ENCODE measurements at regions of chr12 and their contacts with region 1.

Region 1: DNA sequence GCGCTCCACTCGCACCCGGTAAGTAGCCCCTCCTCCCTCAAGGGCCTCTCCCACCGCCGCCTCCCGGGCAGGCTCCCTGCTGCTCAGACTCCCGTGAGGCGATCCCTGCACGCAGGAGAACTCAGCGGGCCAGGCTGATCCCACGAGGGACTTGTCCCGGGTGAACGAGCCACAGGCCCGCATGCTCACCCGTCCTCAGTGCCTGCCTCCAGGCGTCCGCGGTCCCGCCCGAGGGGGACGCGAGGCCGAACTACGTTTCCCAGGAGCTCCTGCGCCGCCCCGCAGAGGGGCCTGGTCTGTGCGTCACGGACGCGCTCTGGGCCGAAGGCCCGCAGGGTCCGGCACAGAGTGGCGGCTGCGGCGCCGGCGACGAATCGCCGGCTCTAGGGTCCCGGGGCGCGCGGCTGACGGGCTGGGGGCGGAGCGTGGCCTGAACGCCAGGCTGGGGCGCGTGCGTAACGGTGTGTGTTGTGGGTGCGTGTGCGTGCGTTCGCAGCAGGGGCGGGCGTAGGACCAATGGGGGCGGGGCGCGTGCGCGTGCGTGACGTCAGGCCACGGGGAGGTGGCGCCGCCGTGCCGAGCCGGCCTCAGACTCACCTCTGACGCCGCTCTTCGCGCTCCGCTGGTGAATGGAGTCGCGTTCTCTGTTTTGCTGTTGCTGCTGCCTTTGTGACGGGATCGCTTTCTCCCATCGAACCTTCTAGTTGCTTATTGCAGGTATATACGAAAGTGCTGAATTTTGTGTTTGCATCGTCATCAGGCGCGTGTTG is at the starts of genes ZNF10 and ZNF891:
- DNase-seq: peak; percentile 99
- ATAC-seq: peak; percentile 85
- H3K4me3 ChIP-seq: peak within 1 kb of the TSS; percentile 66 to 86 (median 77)
- H3K4me3 Mint-ChIP-seq: peak within 1 kb of the TSS; percentile 100
- H3K27ac ChIP-seq: peak within 1 kb of the TSS; percentile 98 to 99
- H3K27ac Mint-ChIP-seq: peak within 1 kb of the TSS; percentile 100
- H3K4me1 ChIP-seq: peaks cover 4 to 13% of the 10 kb centered on the region in 2 donors
- H3K4me1 Mint-ChIP-seq: peaks cover 18% of the 10 kb centered on the region
- H3K27me3 ChIP-seq: no peaks in the 10 kb centered on the region
- H3K27me3 Mint-ChIP-seq: no peaks in the 10 kb centered on the region
- CTCF ChIP-seq: no peak
- total RNA-seq, gene ZNF10: 20.0 and 20.9 TPM in 2 replicates
- total RNA-seq, gene ZNF891: 6.8 and 7.7 TPM in 2 replicates

Region 2: DNA sequence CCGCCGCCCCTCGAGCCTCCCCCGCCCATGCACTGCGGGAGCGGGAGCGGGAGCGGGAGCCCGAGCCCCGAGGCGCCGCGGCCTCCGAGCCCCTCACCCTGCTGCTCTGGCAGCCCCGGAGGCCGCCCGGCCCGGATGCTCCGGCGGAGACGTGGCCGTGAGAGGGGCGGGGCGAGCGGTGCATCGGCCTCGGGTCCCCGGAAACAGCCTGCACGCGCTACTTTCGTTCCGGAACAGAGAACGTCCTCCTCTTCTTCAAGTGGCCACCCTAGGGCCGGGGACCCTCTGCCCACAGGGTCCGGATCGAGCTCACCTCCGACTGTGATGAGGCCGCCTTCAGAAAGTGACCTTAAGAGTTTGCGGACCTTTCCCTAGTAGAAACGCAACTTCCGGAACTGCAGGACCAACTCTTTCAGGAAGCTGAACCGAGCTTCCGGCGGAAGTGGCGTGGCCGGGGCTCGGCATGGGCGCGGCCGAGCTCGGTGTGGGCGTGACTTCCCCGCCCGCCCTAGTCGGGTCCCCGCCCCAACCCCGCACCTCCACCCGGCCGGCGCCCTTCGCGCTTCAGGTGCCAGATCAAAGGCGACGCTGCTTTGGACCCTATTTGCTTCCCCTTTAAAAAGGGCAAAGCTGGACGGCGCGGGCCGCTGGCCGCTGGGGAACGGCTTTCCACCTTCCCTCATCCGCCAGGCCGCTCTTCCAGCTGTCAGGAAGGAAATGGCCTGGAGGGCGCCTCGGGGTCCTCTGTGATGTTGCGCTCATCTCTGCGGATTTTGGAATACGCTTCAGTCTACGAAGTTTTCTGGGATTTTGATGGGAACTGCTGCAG is 301.3 kb before region 1 on chr12 and contains the start of gene GOLGA3:
- CTCF ChIA-PET with region 1: no interaction called
- POLR2A ChIA-PET with region 1: no interaction called
- intact Hi-C with region 1: loop called (anchors 2 kb)
- DNase-seq: peak; percentile 97
- ATAC-seq: peak; percentile 94
- H3K4me3 ChIP-seq: peak within 1 kb of the TSS; percentile 81 to 90 (median 85)
- H3K4me3 Mint-ChIP-seq: peak within 1 kb of the TSS; percentile 96
- H3K27ac ChIP-seq: peak within 1 kb of the TSS; percentile 99
- H3K27ac Mint-ChIP-seq: peak within 1 kb of the TSS; percentile 100
- H3K4me1 ChIP-seq: peaks cover 27 to 29% of the 10 kb centered on the region in 2 donors
- H3K4me1 Mint-ChIP-seq: peaks cover 42% of the 10 kb centered on the region
- H3K27me3 ChIP-seq: no peaks in the 10 kb centered on the region
- H3K27me3 Mint-ChIP-seq: no peaks in the 10 kb centered on the region
- CTCF ChIP-seq: no peak
- total RNA-seq, gene GOLGA3: 66.0 and 68.9 TPM in 2 replicates

Region 3: GRCh38 chr12:132956011-132956788 is 174.0 kb before region 1 on chr12 and contains the start of gene ZNF605:
- CTCF ChIA-PET with region 1: no interaction called
- POLR2A ChIA-PET with region 1: interaction called, 11 read pairs
- intact Hi-C with region 1: loop called (anchors 1 kb)
- DNase-seq: peak; percentile 93
- ATAC-seq: peak; percentile 91
- H3K4me3 ChIP-seq: peak within 1 kb of the TSS; percentile 69 to 95 (median 87)
- H3K4me3 Mint-ChIP-seq: peak within 1 kb of the TSS; percentile 93
- H3K27ac ChIP-seq: peak within 1 kb of the TSS; percentile 65 to 93
- H3K27ac Mint-ChIP-seq: peak within 1 kb of the TSS; percentile 93
- H3K4me1 ChIP-seq: peaks cover 11 to 19% of the 10 kb centered on the region in 2 donors
- H3K4me1 Mint-ChIP-seq: peaks cover 26% of the 10 kb centered on the region
- H3K27me3 ChIP-seq: no peaks in the 10 kb centered on the region
- H3K27me3 Mint-ChIP-seq: no peaks in the 10 kb centered on the region
- CTCF ChIP-seq: no peak
- total RNA-seq, gene ZNF605: 19.7 and 21.7 TPM in 2 replicates

Region 4: GRCh38 chr12:133037207-133038005 is 92.8 kb before region 1 on chr12 and contains the start of gene ZNF84:
- CTCF ChIA-PET with region 1: no interaction called
- POLR2A ChIA-PET with region 1: no interaction called
- intact Hi-C with region 1: loop called (anchors 1 kb)
- DNase-seq: peak; percentile 99
- ATAC-seq: peak; percentile 95
- H3K4me3 ChIP-seq: peak within 1 kb of the TSS; percentile 51 to 82 (median 69)
- H3K4me3 Mint-ChIP-seq: peak within 1 kb of the TSS; percentile 97
- H3K27ac ChIP-seq: peak within 1 kb of the TSS; percentile 88 to 95
- H3K27ac Mint-ChIP-seq: peak within 1 kb of the TSS; percentile 99
- H3K4me1 ChIP-seq: peaks cover 7 to 10% of the 10 kb centered on the region in 2 donors
- H3K4me1 Mint-ChIP-seq: peaks cover 13% of the 10 kb centered on the region
- H3K27me3 ChIP-seq: no peaks in the 10 kb centered on the region
- H3K27me3 Mint-ChIP-seq: peaks cover 3% of the 10 kb centered on the region
- CTCF ChIP-seq: no peak
- total RNA-seq, gene ZNF84: 48.4 and 61.5 TPM in 2 replicates

Region 5: GRCh38 chr12:133156125-133156690 is 26.0 kb after region 1 on chr12:
- CTCF ChIA-PET with region 1: no interaction called
- POLR2A ChIA-PET with region 1: no interaction called
- intact Hi-C with region 1: no loop called
- DNase-seq: no peak
- ATAC-seq: no peak
- H3K4me3 ChIP-seq: no peak overlapping the region
- H3K4me3 Mint-ChIP-seq: no peak overlapping the region
- H3K27ac ChIP-seq: no peak overlapping the region
- H3K27ac Mint-ChIP-seq: no peak overlapping the region
- H3K4me1 ChIP-seq: no peaks in the 10 kb centered on the region
- H3K4me1 Mint-ChIP-seq: no peaks in the 10 kb centered on the region
- H3K27me3 ChIP-seq: no peaks in the 10 kb centered on the region
- H3K27me3 Mint-ChIP-seq: no peaks in the 10 kb centered on the region
- CTCF ChIP-seq: no peak

Region 6: GRCh38 chr12:133181238-133181959 is 51.2 kb after region 1 on chr12 and contains the start of gene ZNF268:
- CTCF ChIA-PET with region 1: no interaction called
- POLR2A ChIA-PET with region 1: interaction called, 3 read pairs
- intact Hi-C with region 1: loop called (anchors 1 kb)
- DNase-seq: peak; percentile 95
- ATAC-seq: peak; percentile 98
- H3K4me3 ChIP-seq: peak within 1 kb of the TSS; percentile 91 to 100 (median 93)
- H3K4me3 Mint-ChIP-seq: peak within 1 kb of the TSS; percentile 95
- H3K27ac ChIP-seq: peak within 1 kb of the TSS; percentile 78 to 95
- H3K27ac Mint-ChIP-seq: peak within 1 kb of the TSS; percentile 96
- H3K4me1 ChIP-seq: peaks cover 10 to 13% of the 10 kb centered on the region in 2 donors
- H3K4me1 Mint-ChIP-seq: peaks cover 18% of the 10 kb centered on the region
- H3K27me3 ChIP-seq: no peaks in the 10 kb centered on the region
- H3K27me3 Mint-ChIP-seq: no peaks in the 10 kb centered on the region
- CTCF ChIP-seq: peak; percentile 88
- total RNA-seq, gene ZNF268: 32.4 and 37.1 TPM in 2 replicates